ENCODE measurements at regions of chr4 and their contacts with region 1.

Region 1: GRCh38 chr4:77819843-77820648 is 878 bp upstream of the CNOT6L start:
- DNase-seq: peak; percentile 97
- H3K4me3 Mint-ChIP-seq: peak overlapping the region; percentile 97
- H3K27ac Mint-ChIP-seq: peak overlapping the region; percentile 98
- H3K4me1 Mint-ChIP-seq: peaks cover 44% of the 10 kb centered on the region
- H3K27me3 Mint-ChIP-seq: no peaks in the 10 kb centered on the region

Region 2: GRCh38 chr4:77075869-77076799 is 743.9 kb before region 1 on chr4 and contains the start of gene CCNI:
- CTCF ChIA-PET with region 1: no interaction called
- intact Hi-C with region 1: loop called (anchors 1 kb)
- DNase-seq: peak; percentile 93
- H3K4me3 Mint-ChIP-seq: peak within 1 kb of the TSS; percentile 99
- H3K27ac Mint-ChIP-seq: peak within 1 kb of the TSS; percentile 100
- H3K4me1 Mint-ChIP-seq: peaks cover 40% of the 10 kb centered on the region
- H3K27me3 Mint-ChIP-seq: no peaks in the 10 kb centered on the region
- total RNA-seq, gene CCNI: 211 to 218 TPM

Region 3: DNA sequence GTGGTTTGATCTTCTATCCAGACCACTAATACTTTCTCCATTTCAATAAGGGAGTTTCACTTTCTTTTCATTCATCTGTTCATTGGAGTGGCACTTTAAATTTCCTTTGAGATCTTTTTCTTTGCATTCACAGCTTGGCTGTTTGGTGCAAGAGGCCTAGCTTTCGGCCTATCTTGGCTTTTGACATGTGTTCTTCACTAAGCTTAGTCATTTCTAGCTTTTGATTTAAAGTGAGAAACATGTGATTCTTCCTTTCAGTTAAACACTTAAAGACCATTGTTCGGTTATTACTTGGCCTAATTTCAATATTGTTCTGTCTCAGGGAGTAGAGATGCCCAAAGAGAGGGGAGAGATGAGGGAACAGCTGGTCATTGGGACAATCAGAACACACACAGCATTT is 190.2 kb before region 1 on chr4:
- CTCF ChIA-PET with region 1: no interaction called
- intact Hi-C with region 1: loop called (anchors 2 kb)
- DNase-seq: peak; percentile 37
- H3K4me3 Mint-ChIP-seq: no peak overlapping the region
- H3K27ac Mint-ChIP-seq: no peak overlapping the region
- H3K4me1 Mint-ChIP-seq: peaks cover 16% of the 10 kb centered on the region
- H3K27me3 Mint-ChIP-seq: no peaks in the 10 kb centered on the region

Region 4: DNA sequence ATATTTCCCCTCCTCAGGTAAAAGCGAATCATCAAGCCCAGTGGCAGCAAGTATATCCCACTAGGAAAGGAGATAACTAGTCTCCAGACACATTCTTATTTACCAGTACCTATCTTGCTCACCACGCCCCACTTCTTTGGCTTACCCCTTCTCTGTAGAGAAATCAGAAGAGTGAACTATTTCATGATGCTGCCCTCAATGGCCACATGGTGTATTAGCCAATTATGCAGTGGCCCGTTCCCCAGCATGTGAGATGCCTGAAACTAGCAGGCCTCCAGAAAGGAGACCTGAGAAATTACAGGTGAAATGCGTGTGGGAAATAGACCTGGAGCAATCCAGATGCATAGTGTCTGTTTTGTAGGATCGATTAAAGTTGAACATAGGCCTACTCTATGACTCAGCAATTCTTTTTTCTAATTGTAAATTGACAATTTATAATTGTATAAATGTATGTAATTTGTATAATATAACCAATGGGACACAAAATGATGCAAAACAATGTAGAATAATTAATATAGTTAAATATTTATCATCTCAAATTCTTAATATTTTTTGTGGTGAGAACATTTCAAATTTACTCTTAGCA is 127.1 kb before region 1 on chr4:
- CTCF ChIA-PET with region 1: no interaction called
- intact Hi-C with region 1: no loop called
- DNase-seq: no peak
- H3K4me3 Mint-ChIP-seq: no peak overlapping the region
- H3K27ac Mint-ChIP-seq: no peak overlapping the region
- H3K4me1 Mint-ChIP-seq: no peaks in the 10 kb centered on the region
- H3K27me3 Mint-ChIP-seq: no peaks in the 10 kb centered on the region

Region 5: DNA sequence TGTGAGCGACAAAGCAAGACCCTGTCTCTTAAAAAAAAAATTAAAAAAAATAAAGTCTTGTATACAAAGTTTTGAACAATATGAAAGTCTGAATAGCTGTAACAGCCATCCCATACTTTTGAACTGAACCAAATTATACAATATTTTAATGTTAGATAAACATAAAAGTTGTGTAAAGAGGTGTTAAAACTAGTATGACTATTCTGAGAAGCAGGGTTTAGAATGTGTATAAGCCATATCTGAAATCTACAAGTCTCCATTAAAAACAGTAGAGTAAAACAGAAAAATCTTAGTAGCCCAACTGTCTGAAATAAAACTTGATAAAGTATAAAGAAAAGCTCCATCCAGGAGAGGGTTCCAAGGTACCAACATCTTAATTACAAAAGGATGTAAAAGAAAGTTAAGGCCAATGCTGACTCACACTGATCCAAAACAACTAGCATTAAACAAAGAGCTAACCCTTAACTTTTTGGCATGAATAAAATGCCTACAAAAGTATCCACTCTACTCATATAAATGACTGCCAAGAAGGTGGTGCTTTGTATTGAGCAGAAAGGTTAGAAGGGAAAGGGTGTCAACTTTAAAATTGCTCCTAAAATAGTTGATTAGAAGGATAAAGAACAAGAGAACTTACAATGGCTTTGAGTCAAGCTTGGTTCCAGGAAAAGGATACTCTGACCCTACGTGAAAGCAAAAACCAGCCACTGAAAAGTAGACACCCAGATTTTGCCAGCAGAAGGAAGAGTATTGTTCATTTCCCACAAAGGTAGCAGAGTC is 19.4 kb before region 1 on chr4:
- CTCF ChIA-PET with region 1: interaction called, 8 read pairs
- intact Hi-C with region 1: loop called (anchors 1 kb)
- DNase-seq: no peak
- H3K4me3 Mint-ChIP-seq: peak overlapping the region; percentile 70
- H3K27ac Mint-ChIP-seq: peak overlapping the region; percentile 88
- H3K4me1 Mint-ChIP-seq: peaks cover 81% of the 10 kb centered on the region
- H3K27me3 Mint-ChIP-seq: no peaks in the 10 kb centered on the region

Region 6: GRCh38 chr4:77852892-77853495 is 32.9 kb after region 1 on chr4:
- CTCF ChIA-PET with region 1: interaction called, 69 read pairs
- intact Hi-C with region 1: loop called (anchors 1 kb)
- DNase-seq: peak; percentile 80
- H3K4me3 Mint-ChIP-seq: peak overlapping the region; percentile 52
- H3K27ac Mint-ChIP-seq: peak overlapping the region; percentile 95
- H3K4me1 Mint-ChIP-seq: peaks cover 51% of the 10 kb centered on the region
- H3K27me3 Mint-ChIP-seq: no peaks in the 10 kb centered on the region

Region 7: GRCh38 chr4:78656968-78657445 is 837.0 kb after region 1 on chr4:
- CTCF ChIA-PET with region 1: no interaction called
- intact Hi-C with region 1: loop called (anchors 1 kb)
- DNase-seq: peak; percentile 45
- H3K4me3 Mint-ChIP-seq: peak overlapping the region; percentile 32
- H3K27ac Mint-ChIP-seq: peak overlapping the region; percentile 84
- H3K4me1 Mint-ChIP-seq: peaks cover 45% of the 10 kb centered on the region
- H3K27me3 Mint-ChIP-seq: no peaks in the 10 kb centered on the region

Measured in activated naive CD4-positive, alpha-beta T cell treated with anti-CD3 and anti-CD28 coated beads for 36 hours (primary cell).